Mucosa of descending colon (tissue), 3 donors: ENCODE measurements at regions of chr12 and their contacts with region 1.

Region 1: DNA sequence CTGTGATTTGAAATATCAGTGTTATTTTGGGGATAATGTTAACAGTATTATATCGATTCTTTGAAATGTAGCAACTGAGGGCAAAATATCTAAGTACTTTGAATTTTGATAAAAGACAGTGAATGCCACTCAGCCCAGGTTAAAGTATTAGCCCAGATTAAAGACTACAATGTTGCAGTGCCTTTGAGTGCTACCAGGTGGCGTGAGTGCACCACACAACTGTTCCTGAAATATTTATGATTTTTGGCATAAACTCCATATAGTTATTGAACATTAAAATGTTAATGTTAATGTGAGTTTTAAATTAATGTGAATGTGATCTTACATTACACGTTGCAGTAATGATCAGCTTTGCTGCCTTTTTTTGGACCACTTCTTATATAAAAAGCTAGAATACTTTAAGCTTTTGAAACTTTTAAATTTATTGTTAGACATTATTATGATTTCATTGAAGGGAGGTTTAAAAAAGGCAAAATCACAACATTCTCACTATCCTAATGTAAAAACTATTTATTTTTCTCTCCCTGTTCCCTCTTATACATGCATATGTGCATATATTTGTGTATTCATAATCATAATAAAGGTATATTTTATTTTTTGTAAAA is 22.5 kb downstream of the MRPS35 start:
- DNase-seq: peak in 2 of 3 donors; percentile 30 to 42
- ATAC-seq: peak; percentile 77
- H3K4me3 ChIP-seq: no peak overlapping the region
- H3K4me1 ChIP-seq: no peaks in the 10 kb centered on the region
- CTCF ChIP-seq: peak; percentile 54

Region 2: DNA sequence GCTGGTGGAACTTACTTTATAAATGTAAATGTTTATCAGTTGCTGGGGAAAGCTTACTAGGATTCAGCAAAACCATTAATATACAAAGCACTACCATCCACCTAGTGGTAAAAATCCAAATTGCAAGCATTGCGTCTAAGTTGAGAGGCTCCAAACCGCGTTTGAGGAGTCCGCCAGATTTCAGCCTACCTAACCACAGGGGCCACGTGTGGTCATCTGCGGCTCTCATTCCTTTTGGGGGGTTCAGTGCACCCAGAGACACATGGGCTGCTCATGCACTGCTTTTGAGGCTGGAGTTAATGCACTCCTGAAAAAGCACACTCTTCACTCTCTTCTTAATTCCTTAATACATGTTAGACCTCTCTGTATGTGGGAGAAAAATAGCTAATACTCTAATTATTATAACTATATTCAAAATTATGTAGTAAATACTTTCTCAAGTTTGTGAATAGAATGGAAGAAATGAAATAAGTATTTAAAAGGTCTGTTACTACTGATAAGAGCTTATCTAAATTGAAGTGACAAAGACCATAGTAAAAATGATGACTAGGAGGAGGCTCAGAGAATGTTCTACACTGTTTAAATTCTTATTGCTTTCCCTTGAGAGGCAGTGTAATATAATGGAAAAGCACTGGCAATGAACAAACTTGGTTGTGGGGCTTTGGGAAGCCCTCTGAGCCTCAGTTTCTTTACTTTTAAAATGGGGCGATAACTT is 88.3 kb after region 1 on chr12:
- intact Hi-C with region 1: loop called in 1 of 2 experiments (anchors 5 kb)
- DNase-seq: peak in 2 of 3 donors; percentile 27 to 81
- ATAC-seq: peak; percentile 75
- H3K4me3 ChIP-seq: no peak overlapping the region
- H3K4me1 ChIP-seq: peaks cover 16% of the 10 kb centered on the region
- CTCF ChIP-seq: peak; percentile 57

Region 3: DNA sequence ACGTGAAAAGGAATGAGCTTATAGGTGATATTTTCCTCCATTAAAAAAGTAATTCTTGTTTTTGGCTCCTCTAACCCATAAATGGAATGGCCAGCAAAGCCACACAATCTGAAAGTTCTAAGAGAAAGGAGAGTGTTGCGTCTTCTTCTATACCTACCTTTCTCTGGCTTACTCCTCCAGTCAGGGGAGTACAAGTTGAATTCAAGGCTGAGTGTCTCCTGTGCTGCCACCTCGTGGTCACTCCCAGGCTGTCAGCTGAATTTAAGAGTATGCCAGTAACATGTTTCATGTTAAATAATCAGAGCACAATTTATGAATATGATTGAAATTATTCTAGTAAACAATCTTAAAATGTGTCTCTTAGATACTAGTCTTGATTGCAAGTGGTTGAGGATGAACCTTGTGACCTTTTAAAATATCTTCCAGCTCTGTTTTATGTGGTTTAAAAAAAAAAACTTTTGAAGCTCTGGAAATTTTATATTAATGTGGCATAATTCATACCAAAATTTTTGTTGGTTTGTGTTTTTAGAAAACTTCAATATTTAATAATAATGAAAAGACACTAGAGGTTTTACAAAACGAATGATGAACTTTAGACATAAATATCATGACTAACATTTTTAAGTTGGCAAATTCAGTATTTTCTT is 207.7 kb after region 1 on chr12:
- intact Hi-C with region 1: loop called (anchors 10 kb)
- DNase-seq: peak in 2 of 3 donors; percentile 79 to 89
- ATAC-seq: peak; percentile 83
- H3K4me3 ChIP-seq: no peak overlapping the region
- H3K4me1 ChIP-seq: no peaks in the 10 kb centered on the region
- CTCF ChIP-seq: peak; percentile 70

Region 4: GRCh38 chr12:28026701-28027100 is 293.5 kb after region 1 on chr12:
- intact Hi-C with region 1: no loop called
- DNase-seq: no peak
- ATAC-seq: no peak
- H3K4me3 ChIP-seq: no peak overlapping the region
- H3K4me1 ChIP-seq: no peaks in the 10 kb centered on the region
- CTCF ChIP-seq: no peak

Region 5: GRCh38 chr12:28127455-28127854 is 394.3 kb after region 1 on chr12:
- intact Hi-C with region 1: no loop called
- DNase-seq: no peak
- ATAC-seq: no peak
- H3K4me3 ChIP-seq: no peak overlapping the region
- H3K4me1 ChIP-seq: no peaks in the 10 kb centered on the region
- CTCF ChIP-seq: no peak